Transverse colon (tissue), 4 donors: ENCODE measurements at regions of chr10 and their contacts with region 1.

Region 1: GRCh38 chr10:101228153-101228973 is 900 bp downstream of the LBX1 start:
- DNase-seq: no peak
- H3K4me3 ChIP-seq: peak overlapping the region in 1 of 4 donors; percentile 20
- H3K27ac ChIP-seq: no peak overlapping the region
- H3K4me1 ChIP-seq: peaks cover 20 to 57% (median 41%) of the 10 kb centered on the region in 4 donors
- H3K27me3 ChIP-seq: peaks cover 100% of the 10 kb centered on the region
- CTCF ChIP-seq: no peak
- EP300 ChIP-seq: no peak
- POLR2A ChIP-seq: no peak

Region 2: DNA sequence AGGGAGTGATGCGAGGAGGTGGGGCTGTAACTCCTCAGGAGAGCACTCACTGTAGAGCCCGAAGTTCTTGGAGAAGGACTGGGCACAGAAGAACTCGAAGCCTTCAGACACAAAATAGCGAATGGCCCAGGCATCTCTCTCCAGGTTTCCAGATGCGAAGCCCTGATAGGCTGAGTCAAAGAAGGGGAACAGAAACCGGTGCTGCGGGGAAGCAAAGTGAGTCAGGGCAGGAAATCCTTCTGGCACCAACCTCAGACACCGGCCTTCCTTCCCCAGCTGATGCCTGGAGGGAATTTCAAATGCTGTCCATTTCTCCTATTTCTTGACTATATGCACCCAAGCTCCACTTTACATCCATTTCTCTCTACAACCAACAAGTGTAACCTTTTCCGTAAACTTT is 1824.7 kb before region 1 on chr10:
- in situ Hi-C with region 1: no loop called
- intact Hi-C with region 1: loop called (anchors 5 kb)
- DNase-seq: no peak
- H3K4me3 ChIP-seq: no peak overlapping the region
- H3K27ac ChIP-seq: no peak overlapping the region
- H3K4me1 ChIP-seq: no peaks in the 10 kb centered on the region
- H3K27me3 ChIP-seq: no peaks in the 10 kb centered on the region
- CTCF ChIP-seq: no peak
- EP300 ChIP-seq: no peak
- POLR2A ChIP-seq: no peak

Region 3: DNA sequence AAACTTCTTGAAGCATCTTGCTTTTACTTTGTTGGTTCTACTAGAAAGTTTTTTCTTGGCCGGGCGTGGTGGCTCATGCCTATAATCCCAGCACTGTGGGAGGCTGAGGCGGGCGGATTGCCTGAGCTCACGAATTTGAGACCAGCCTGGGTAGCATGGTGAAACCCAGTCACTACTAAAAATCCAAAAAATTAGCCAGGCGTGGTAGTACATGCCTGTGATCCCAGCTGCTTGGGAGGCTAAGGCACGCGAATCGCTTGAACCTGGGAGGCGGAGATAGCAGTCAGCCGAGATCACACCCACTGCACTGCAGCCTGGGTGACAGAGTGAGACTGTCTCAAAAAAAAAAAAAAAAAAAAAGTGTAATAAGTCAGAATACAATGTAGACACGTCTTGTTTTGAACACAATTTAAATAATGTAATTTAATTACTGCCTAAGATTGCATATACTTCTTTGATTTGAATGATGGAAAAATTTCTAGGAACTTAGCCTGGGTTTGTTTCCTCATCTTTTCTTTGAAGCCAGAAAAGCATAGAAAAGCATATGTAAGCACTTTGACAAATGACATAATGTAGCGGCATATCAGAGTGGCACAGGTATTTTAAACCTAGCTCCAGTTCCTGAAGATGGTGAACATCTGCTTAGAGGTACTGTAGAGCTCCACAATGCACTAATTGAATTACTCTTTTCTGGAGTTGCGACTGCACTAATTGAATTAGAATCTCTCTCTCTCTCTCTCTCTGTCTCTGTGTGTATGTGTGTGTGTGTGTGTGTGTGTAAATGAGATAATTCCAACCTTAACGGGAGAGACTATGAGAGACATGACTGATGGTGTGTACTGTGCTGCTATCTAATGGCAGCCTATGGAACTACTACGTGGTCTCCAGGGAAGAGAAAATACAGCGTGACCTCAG is 213.4 kb after region 1 on chr10:
- in situ Hi-C with region 1: no loop called
- intact Hi-C with region 1: no loop called
- DNase-seq: no peak
- H3K4me3 ChIP-seq: no peak overlapping the region
- H3K27ac ChIP-seq: no peak overlapping the region
- H3K4me1 ChIP-seq: no peaks in the 10 kb centered on the region
- H3K27me3 ChIP-seq: no peaks in the 10 kb centered on the region
- CTCF ChIP-seq: peak; percentile 23 to 48 (median 40)
- EP300 ChIP-seq: no peak
- POLR2A ChIP-seq: no peak